ENCODE measurements at regions of chr7 and their contacts with region 1.

Region 1: DNA sequence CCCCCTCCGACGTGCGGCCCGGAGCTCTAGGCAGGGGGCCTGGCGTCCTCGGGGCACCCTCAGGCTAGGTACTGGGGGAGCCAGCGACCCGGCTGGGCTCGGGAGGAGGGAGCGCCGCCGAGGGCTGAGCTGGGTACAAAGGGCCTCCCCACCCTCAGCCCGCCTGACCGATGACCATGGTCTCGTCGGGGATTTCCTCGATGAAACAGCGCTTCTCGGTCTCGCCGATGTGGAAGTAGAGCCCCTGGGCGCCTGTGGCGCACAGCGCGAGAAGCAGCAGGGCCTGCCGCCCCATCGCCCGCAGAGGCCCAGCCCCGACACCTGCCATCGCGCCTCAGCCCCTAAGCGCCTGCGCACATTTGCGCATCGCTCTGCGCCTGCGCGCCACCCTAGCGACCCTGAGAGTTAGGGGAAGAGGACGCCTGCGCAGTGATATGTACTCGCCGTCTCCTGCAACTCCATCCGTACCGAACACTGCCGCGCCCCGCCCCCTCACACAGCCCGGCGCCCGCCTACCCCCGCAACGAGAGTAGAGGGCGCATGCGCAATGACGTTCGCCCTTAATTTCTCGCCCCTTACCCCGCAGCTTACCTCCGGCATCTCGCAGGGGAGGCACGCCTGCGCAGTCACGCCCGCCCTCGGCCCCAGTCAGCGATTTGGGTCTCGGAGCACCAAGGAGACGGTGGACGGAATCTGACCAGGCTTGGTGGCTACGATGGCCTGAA is at the start of gene TMED4:
- DNase-seq: peak; percentile 100
- H3K4me3 Mint-ChIP-seq: peak within 1 kb of the TSS; percentile 88
- H3K27ac Mint-ChIP-seq: peak within 1 kb of the TSS; percentile 93
- H3K4me1 Mint-ChIP-seq: peaks cover 23% of the 10 kb centered on the region
- H3K27me3 Mint-ChIP-seq: peaks cover 2% of the 10 kb centered on the region
- total RNA-seq, gene TMED4: 70.3 and 75.1 TPM in 2 replicates

Region 2: DNA sequence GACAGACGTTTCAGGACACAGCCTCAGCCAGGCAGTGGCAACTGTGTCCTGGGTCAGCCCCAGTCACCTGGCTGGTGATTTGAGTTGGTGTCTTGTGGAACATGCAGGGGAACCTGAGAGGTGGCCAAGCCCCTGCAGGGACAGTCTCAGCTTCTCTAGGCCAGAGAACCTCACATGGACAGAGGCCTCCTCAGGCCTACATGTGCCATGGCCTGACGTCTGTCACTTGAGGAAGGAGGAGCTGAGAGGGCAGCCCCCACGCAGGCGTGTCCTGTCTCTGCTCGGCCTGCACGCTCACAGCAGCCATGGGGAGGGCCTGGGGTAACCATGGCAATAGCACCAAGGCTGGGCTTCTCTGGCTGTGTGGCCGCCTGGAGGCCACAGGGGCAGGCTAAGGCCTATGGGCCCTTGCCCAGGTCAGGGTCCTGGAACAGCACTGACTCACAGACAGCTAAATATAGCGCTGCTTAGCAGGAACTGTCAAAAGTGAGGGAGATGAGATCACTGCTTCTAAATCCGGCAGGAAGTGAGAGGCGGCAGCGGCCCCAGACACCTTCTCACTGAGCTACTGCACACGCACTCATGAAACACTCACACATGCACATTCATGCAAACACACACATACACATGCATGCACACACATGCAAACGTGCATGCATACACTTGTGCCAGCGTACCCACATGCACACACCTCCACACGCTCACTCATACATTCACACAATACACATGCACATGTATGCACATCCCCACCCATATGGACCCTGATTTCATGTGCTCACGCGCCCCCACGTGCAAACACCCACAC is 324.2 kb before region 1 on chr7:
- intact Hi-C with region 1: loop called (anchors 1 kb)
- DNase-seq: peak; percentile 64
- H3K4me3 Mint-ChIP-seq: peak overlapping the region; percentile 9
- H3K27ac Mint-ChIP-seq: peak overlapping the region; percentile 61
- H3K4me1 Mint-ChIP-seq: peaks cover 30% of the 10 kb centered on the region
- H3K27me3 Mint-ChIP-seq: no peaks in the 10 kb centered on the region

Region 3: GRCh38 chr7:44534501-44534900 is 47.5 kb before region 1 on chr7:
- intact Hi-C with region 1: no loop called
- DNase-seq: peak; percentile 28
- H3K4me3 Mint-ChIP-seq: no peak overlapping the region
- H3K27ac Mint-ChIP-seq: no peak overlapping the region
- H3K4me1 Mint-ChIP-seq: no peaks in the 10 kb centered on the region
- H3K27me3 Mint-ChIP-seq: no peaks in the 10 kb centered on the region

Region 4: GRCh38 chr7:44547536-44548231 is 34.4 kb before region 1 on chr7:
- intact Hi-C with region 1: no loop called
- DNase-seq: no peak
- H3K4me3 Mint-ChIP-seq: no peak overlapping the region
- H3K27ac Mint-ChIP-seq: no peak overlapping the region
- H3K4me1 Mint-ChIP-seq: peaks cover 13% of the 10 kb centered on the region
- H3K27me3 Mint-ChIP-seq: peaks cover 9% of the 10 kb centered on the region

Region 5: DNA sequence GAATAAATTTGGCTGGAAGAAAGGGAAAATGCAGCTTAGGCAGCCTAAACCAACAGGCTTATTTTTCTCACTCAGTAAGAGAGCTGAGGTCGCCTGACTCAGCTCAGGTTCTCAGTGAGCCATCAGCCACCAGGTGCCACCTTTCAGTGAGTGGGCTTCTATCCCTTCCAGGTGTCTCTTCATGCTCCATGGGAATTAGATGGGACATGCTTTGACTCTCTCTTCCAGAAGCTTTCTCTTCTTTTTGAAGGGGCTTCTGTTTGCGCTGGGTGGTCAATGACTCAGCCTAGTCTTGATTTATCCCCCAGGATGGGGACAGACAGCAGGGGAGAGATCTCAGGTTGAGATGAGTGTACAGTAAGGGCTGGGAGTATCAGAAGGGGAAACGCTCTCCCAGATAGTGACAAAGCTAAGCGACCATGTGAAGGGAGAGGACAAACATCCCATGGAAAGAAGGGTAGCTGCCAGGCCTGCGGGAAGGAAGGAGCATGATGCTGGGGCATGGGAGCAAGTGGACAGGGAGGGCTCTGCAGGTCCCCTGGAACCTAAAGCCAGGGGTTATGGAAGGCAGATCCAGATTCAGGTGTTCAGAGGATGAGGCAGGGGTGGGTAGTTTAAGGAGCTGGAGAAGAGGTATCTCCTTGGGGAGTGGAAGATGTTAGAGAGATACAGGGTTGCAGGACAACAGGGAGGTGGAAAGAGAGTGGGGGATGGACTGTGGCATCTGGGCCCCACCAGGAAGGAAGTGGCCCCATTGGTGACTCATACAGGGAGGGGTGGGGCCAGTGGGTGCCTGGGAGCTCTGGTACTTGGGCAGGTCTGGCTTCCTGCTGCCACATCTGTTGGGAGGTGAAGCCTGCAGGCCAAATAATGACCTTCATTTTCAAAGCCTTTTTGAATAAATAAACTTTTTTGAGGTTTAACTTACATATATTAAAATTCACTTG is 56.8 kb after region 1 on chr7:
- intact Hi-C with region 1: loop called (anchors 2 kb)
- DNase-seq: peak; percentile 84
- H3K4me3 Mint-ChIP-seq: peak overlapping the region; percentile 79
- H3K27ac Mint-ChIP-seq: peak overlapping the region; percentile 99
- H3K4me1 Mint-ChIP-seq: peaks cover 70% of the 10 kb centered on the region
- H3K27me3 Mint-ChIP-seq: no peaks in the 10 kb centered on the region

Region 6: GRCh38 chr7:44650772-44651171 is 68.7 kb after region 1 on chr7:
- intact Hi-C with region 1: no loop called
- DNase-seq: no peak
- H3K4me3 Mint-ChIP-seq: no peak overlapping the region
- H3K27ac Mint-ChIP-seq: no peak overlapping the region
- H3K4me1 Mint-ChIP-seq: no peaks in the 10 kb centered on the region
- H3K27me3 Mint-ChIP-seq: no peaks in the 10 kb centered on the region

Region 7: GRCh38 chr7:44693721-44694285 is 111.8 kb after region 1 on chr7:
- intact Hi-C with region 1: no loop called
- DNase-seq: no peak
- H3K4me3 Mint-ChIP-seq: no peak overlapping the region
- H3K27ac Mint-ChIP-seq: no peak overlapping the region
- H3K4me1 Mint-ChIP-seq: peaks cover 2% of the 10 kb centered on the region
- H3K27me3 Mint-ChIP-seq: no peaks in the 10 kb centered on the region

Region 8: GRCh38 chr7:44914992-44915607 is 333.1 kb after region 1 on chr7:
- intact Hi-C with region 1: loop called (anchors 1 kb)
- DNase-seq: peak; percentile 78
- H3K4me3 Mint-ChIP-seq: peak overlapping the region; percentile 13
- H3K27ac Mint-ChIP-seq: peak overlapping the region; percentile 92
- H3K4me1 Mint-ChIP-seq: peaks cover 14% of the 10 kb centered on the region
- H3K27me3 Mint-ChIP-seq: no peaks in the 10 kb centered on the region

Region 9: GRCh38 chr7:45111298-45112223 is 529.5 kb after region 1 on chr7 and contains the start of gene TBRG4:
- intact Hi-C with region 1: loop called (anchors 5 kb)
- DNase-seq: peak; percentile 93
- H3K4me3 Mint-ChIP-seq: peak within 1 kb of the TSS; percentile 98
- H3K27ac Mint-ChIP-seq: peak within 1 kb of the TSS; percentile 96
- H3K4me1 Mint-ChIP-seq: peaks cover 34% of the 10 kb centered on the region
- H3K27me3 Mint-ChIP-seq: peaks cover 20% of the 10 kb centered on the region
- total RNA-seq, gene TBRG4: 167 and 180 TPM in 2 replicates

Measured in activated T-helper 2 cell treated with anti-CD3 and anti-CD28 coated beads, Interferon-gamma antibody, Interleukin-2, Interleukin-4, amounts not matched to agents 10 μg/mL and 5 μg/mL and 100 μg/mL, durations not matched to agents 14 hours and 24 hours and 36 hours (primary cell).